HCT116 (cell line): ENCODE measurements at regions of chr10 and their contacts with region 1.

Region 1: DNA sequence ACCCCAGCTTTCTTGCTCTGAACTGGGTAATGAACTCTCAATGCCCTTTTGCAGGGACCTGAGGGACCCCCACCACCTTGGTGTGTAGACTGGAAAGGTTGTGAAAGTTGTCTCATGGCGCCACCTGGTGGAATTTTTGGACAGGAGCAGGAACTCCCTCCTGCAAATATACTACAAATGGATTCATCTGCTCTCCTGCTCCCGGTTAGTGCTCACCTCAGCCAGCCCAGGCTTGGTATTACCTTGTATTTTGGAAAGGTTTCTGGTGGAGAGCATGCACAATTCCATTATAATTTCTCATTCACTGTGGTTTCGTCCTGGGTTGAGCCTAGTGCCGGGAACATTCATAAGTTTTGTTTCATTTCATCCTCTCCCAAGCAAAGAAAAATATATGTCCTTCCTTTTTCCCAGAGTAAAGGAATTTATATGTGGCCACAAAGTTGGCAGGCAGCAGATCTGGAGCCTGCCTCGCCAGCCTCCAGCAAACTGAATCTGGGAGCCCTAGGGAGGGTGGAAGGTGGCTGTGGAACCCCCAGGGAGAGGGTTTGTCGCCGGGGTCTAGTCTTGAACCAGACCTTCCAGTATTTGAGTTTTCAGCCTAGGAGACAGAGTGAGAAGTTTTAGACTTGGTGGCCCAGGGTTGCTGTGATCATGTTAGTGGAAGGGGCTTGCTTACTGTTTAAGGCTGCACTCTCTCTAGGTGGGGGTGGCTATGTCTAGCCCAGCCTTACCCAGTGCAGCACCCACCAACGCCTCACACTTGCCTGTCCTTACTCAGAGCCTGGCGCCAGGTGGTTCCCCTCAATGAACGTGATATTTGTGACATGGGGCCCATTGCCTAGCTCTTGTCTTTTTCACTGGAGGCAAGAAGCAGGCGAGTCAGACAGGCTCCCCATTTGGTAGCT is 9.5 kb downstream of the FAM241B start:
- DNase-seq: peak; percentile 65
- ATAC-seq: peak; percentile 79
- H3K4me3 ChIP-seq: no peak overlapping the region
- H3K27ac ChIP-seq: no peak overlapping the region
- H3K4me1 ChIP-seq: peaks cover 4 to 8% of the 10 kb centered on the region in 2 experiments
- H3K27me3 ChIP-seq: no peaks in the 10 kb centered on the region
- CTCF ChIP-seq: peak; percentile 74 to 93 (median 91)
- POLR2A ChIP-seq: no peak
- RAD21 ChIP-seq: peak; percentile 93

Region 2: GRCh38 chr10:69237528-69238159 is 401.9 kb before region 1 on chr10:
- CTCF ChIA-PET with region 1: no interaction called
- POLR2A ChIA-PET with region 1: no interaction called
- RAD21 ChIA-PET with region 1: no interaction called
- intact Hi-C with region 1: loop called (anchors 5 kb)
- DNase-seq: peak; percentile 59
- ATAC-seq: peak; percentile 99
- H3K4me3 ChIP-seq: no peak overlapping the region
- H3K27ac ChIP-seq: no peak overlapping the region
- H3K4me1 ChIP-seq: peaks cover 4 to 16% of the 10 kb centered on the region in 2 experiments
- H3K27me3 ChIP-seq: no peaks in the 10 kb centered on the region
- CTCF ChIP-seq: peak; percentile 89 to 93 (median 90)
- POLR2A ChIP-seq: no peak
- RAD21 ChIP-seq: peak; percentile 98

Region 3: GRCh38 chr10:69408318-69409175 is 231.0 kb before region 1 on chr10:
- CTCF ChIA-PET with region 1: interaction called, 19 read pairs
- POLR2A ChIA-PET with region 1: no interaction called
- RAD21 ChIA-PET with region 1: no interaction called
- intact Hi-C with region 1: loop called (anchors 2 kb)
- DNase-seq: peak; percentile 88
- ATAC-seq: peak; percentile 87
- H3K4me3 ChIP-seq: no peak overlapping the region
- H3K27ac ChIP-seq: peak overlapping the region; percentile 34; the same call in 1 of the 2 replicates
- H3K4me1 ChIP-seq: peaks cover 9 to 21% of the 10 kb centered on the region in 2 experiments
- H3K27me3 ChIP-seq: no peaks in the 10 kb centered on the region
- CTCF ChIP-seq: peak; percentile 30 to 59 (median 55); a peak in 5 of 6 replicates
- POLR2A ChIP-seq: peak; percentile 43
- RAD21 ChIP-seq: peak; percentile 48

Region 4: GRCh38 chr10:69425511-69426298 is 213.8 kb before region 1 on chr10:
- CTCF ChIA-PET with region 1: interaction called, 3 read pairs
- POLR2A ChIA-PET with region 1: no interaction called
- RAD21 ChIA-PET with region 1: interaction called in 1 of 2 experiments, 3 read pairs
- intact Hi-C with region 1: loop called (anchors 2 kb)
- DNase-seq: no peak
- ATAC-seq: no peak
- H3K4me3 ChIP-seq: no peak overlapping the region
- H3K27ac ChIP-seq: no peak overlapping the region
- H3K4me1 ChIP-seq: peaks cover 0 to 15% of the 10 kb centered on the region in 2 experiments; a peak in 1 of 4 replicates
- H3K27me3 ChIP-seq: no peaks in the 10 kb centered on the region
- CTCF ChIP-seq: no peak
- POLR2A ChIP-seq: no peak
- RAD21 ChIP-seq: no peak

Region 5: GRCh38 chr10:69515699-69516259 is 123.8 kb before region 1 on chr10:
- CTCF ChIA-PET with region 1: interaction called, 148 read pairs
- POLR2A ChIA-PET with region 1: interaction called, 10 read pairs
- RAD21 ChIA-PET with region 1: interaction called, 14 to 17 read pairs
- intact Hi-C with region 1: loop called (anchors 1 kb)
- DNase-seq: peak; percentile 47
- ATAC-seq: peak; percentile 96
- H3K4me3 ChIP-seq: no peak overlapping the region
- H3K27ac ChIP-seq: no peak overlapping the region
- H3K4me1 ChIP-seq: no peaks in the 10 kb centered on the region
- H3K27me3 ChIP-seq: no peaks in the 10 kb centered on the region
- CTCF ChIP-seq: peak; percentile 89 to 94 (median 89)
- POLR2A ChIP-seq: no peak
- RAD21 ChIP-seq: peak; percentile 93

Region 6: GRCh38 chr10:69716711-69717560 is 77.4 kb after region 1 on chr10:
- CTCF ChIA-PET with region 1: interaction called, 102 read pairs
- POLR2A ChIA-PET with region 1: no interaction called
- RAD21 ChIA-PET with region 1: interaction called, 3 read pairs
- intact Hi-C with region 1: loop called (anchors 1 kb)
- DNase-seq: peak; percentile 51
- ATAC-seq: peak; percentile 99
- H3K4me3 ChIP-seq: no peak overlapping the region
- H3K27ac ChIP-seq: no peak overlapping the region
- H3K4me1 ChIP-seq: no peaks in the 10 kb centered on the region; a peak in 2 of 4 replicates
- H3K27me3 ChIP-seq: no peaks in the 10 kb centered on the region
- CTCF ChIP-seq: peak; percentile 83 to 93 (median 86)
- POLR2A ChIP-seq: no peak
- RAD21 ChIP-seq: peak; percentile 91

Region 7: GRCh38 chr10:69914398-69915214 is 275.1 kb after region 1 on chr10:
- CTCF ChIA-PET with region 1: interaction called, 7 read pairs
- POLR2A ChIA-PET with region 1: no interaction called
- RAD21 ChIA-PET with region 1: no interaction called
- intact Hi-C with region 1: loop called (anchors 5 kb)
- DNase-seq: peak; percentile 35
- ATAC-seq: peak; percentile 96
- H3K4me3 ChIP-seq: no peak overlapping the region
- H3K27ac ChIP-seq: no peak overlapping the region
- H3K4me1 ChIP-seq: no peaks in the 10 kb centered on the region
- H3K27me3 ChIP-seq: no peaks in the 10 kb centered on the region
- CTCF ChIP-seq: peak; percentile 91 to 95 (median 91)
- POLR2A ChIP-seq: no peak
- RAD21 ChIP-seq: peak; percentile 94

Region 8: GRCh38 chr10:70096705-70097420 is 457.3 kb after region 1 on chr10:
- CTCF ChIA-PET with region 1: no interaction called
- POLR2A ChIA-PET with region 1: no interaction called
- RAD21 ChIA-PET with region 1: no interaction called
- intact Hi-C with region 1: no loop called
- DNase-seq: no peak
- ATAC-seq: no peak
- H3K4me3 ChIP-seq: no peak overlapping the region
- H3K27ac ChIP-seq: no peak overlapping the region
- H3K4me1 ChIP-seq: no peaks in the 10 kb centered on the region
- H3K27me3 ChIP-seq: no peaks in the 10 kb centered on the region
- CTCF ChIP-seq: no peak
- POLR2A ChIP-seq: no peak
- RAD21 ChIP-seq: no peak